ENCODE measurements at regions of chr3 and their contacts with region 1.

Region 1: DNA sequence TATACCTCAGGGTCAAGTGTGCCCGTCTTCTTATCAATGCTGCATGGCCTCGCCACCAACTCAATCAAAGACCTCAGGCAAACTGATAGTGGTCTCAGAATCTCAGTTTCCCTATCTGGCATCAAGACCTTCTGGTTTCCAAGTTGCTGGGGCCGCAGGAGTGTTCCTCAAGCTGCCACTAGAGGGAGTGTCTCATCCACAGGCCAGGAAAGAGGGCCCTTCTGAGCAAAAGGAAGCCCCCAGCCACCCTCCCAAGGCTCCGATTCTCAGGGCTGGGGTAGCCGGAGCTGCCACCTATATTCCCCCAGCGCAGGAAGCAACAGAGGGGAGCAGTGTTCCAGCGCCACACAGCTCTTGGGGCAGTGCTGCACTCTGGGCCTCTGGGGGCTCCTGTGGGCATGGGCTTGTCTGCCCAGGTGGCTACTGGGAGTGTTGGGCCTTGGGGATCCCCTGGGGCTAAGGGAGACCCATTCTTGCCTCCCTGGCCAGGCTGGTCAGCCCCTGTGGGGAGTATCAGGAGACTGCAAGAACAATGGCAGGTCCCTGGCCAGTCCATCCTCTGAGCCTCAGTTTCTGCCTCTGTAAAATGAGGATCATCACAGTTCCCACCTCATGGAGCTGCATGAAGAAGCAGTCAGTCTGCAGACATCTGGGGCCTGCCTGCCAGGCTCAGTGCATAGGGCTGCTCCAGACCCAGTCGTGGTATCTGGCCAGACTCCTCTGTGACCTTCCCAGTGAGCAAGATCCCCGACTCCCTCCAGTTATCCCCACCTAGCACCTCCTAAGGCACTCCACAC is 23.4 kb upstream of the SEC13 start:
- DNase-seq: no peak
- H3K4me3 ChIP-seq: no peak overlapping the region
- H3K27ac ChIP-seq: no peak overlapping the region
- H3K27me3 ChIP-seq: peaks cover 16% of the 10 kb centered on the region
- CTCF ChIP-seq: peak; percentile 93

Region 2: GRCh38 chr3:10273702-10274305 is 70.5 kb before region 1 on chr3:
- CTCF ChIA-PET with region 1: no interaction called
- POLR2A ChIA-PET with region 1: no interaction called
- DNase-seq: no peak
- H3K4me3 ChIP-seq: no peak overlapping the region
- H3K27ac ChIP-seq: no peak overlapping the region
- H3K27me3 ChIP-seq: no peaks in the 10 kb centered on the region
- CTCF ChIP-seq: no peak

Region 3: GRCh38 chr3:10366651-10367101 is 22.3 kb after region 1 on chr3:
- CTCF ChIA-PET with region 1: interaction called, 10 read pairs
- POLR2A ChIA-PET with region 1: no interaction called
- DNase-seq: peak; percentile 97
- H3K4me3 ChIP-seq: no peak overlapping the region
- H3K27ac ChIP-seq: peak overlapping the region; percentile 95
- H3K27me3 ChIP-seq: no peaks in the 10 kb centered on the region
- CTCF ChIP-seq: 0 out of 2 replicates have a peak, but pooled peaks have one; percentile 1